Activated T-helper 2 cell treated with anti-CD3 and anti-CD28 coated beads, Interferon-gamma antibody, Interleukin-2, Interleukin-4, amounts not matched to agents 10 μg/mL and 5 μg/mL and 100 μg/mL, durations not matched to agents 14 hours and 24 hours and 36 hours (primary cell): ENCODE measurements at regions of chr9 and their contacts with region 1.

Region 1: GRCh38 chr9:124254261-124254682 is 3.5 kb upstream of the NEK6 start:
- DNase-seq: peak; percentile 27
- H3K4me3 Mint-ChIP-seq: peak overlapping the region; percentile 43
- H3K27ac Mint-ChIP-seq: peak overlapping the region; percentile 55
- H3K4me1 Mint-ChIP-seq: peaks cover 60% of the 10 kb centered on the region
- H3K27me3 Mint-ChIP-seq: no peaks in the 10 kb centered on the region

Region 2: DNA sequence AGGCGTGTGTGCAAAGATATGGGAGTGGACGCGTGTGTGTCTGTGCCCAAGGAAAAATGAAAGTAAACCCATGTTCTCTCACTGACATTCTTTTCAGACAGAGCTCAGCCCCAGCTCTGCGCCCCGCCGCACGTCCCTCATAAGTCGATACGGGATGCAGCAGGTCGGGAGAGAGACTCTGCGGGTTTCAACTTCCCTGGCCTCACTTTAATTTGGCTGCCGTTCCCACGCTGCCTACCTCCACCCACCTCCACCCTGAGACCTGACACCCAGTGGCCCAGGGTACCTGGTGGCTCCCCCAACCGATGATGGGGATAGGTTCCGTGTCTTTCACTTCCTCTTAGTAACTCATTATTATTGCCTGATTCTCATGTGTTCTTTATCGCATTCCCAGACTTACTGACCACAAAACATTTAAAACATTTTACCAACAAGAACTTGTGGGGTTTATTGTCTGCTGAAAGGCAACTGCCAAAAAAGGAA is 223.3 kb before region 1 on chr9:
- intact Hi-C with region 1: no loop called
- DNase-seq: no peak
- H3K4me3 Mint-ChIP-seq: no peak overlapping the region
- H3K27ac Mint-ChIP-seq: no peak overlapping the region
- H3K4me1 Mint-ChIP-seq: no peaks in the 10 kb centered on the region
- H3K27me3 Mint-ChIP-seq: peaks cover 54% of the 10 kb centered on the region

Region 3: GRCh38 chr9:124239249-124240073 is 14.8 kb before region 1 on chr9:
- intact Hi-C with region 1: loop called (anchors 1 kb)
- DNase-seq: no peak
- H3K4me3 Mint-ChIP-seq: no peak overlapping the region
- H3K27ac Mint-ChIP-seq: peak overlapping the region; percentile 54
- H3K4me1 Mint-ChIP-seq: peaks cover 47% of the 10 kb centered on the region
- H3K27me3 Mint-ChIP-seq: peaks cover 1% of the 10 kb centered on the region